CD8-positive, alpha-beta T cell (primary cell): ENCODE measurements at regions of chr5 and their contacts with region 1.

Region 1: DNA sequence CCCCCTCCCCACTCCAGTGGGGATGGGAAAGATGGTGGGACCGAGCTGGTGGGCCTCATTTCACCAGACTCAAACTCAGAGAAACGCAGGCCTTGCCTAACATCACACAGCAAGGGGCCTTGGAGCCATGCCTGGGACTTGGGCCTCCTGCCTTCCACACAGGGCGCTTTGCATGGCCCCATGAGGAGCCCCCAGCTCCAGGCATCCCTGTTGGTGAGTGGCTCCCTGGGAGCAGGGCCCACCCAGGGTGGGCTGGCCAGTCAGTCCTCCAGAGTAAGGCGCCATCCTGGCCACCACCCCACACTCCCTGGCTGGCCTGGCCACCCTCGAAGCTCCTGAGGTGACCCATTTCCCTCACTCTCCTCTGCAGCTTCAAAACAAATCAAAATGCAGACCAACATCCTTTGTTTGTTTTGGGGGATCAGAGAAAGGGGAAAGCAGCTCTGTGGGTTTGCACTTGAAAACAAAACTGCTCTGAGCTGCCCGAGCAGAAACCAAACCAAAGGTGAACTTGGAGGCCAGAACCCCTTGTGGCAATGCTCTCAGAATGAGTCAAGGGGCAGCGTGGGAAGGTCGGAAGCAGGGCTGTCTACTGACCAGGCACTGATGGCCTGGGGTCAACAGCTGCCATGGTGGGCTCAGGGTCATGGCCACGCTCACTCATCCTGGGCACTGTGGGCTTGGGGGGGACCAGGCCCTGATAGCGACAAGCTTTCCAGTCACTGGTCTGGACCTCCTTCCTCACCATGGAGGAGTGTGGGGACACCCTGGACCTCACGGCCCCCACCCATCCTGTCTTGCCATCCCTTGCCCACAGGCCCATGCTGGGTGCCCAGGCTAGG is 37.0 kb upstream of the VDAC1 start:
- DNase-seq: peak in 1 of 9 experiments; percentile 45
- ATAC-seq: no peak
- H3K4me3 ChIP-seq: no peak overlapping the region
- H3K4me3 Mint-ChIP-seq: peak overlapping the region; percentile 60
- H3K27ac ChIP-seq: no peak overlapping the region
- H3K27ac Mint-ChIP-seq: peak overlapping the region; percentile 87
- H3K4me1 ChIP-seq: peaks cover 52% of the 10 kb centered on the region
- H3K4me1 Mint-ChIP-seq: peaks cover 61% of the 10 kb centered on the region
- H3K27me3 ChIP-seq: no peaks in the 10 kb centered on the region
- H3K27me3 Mint-ChIP-seq: no peaks in the 10 kb centered on the region
- CTCF ChIP-seq: no peak

Region 2: DNA sequence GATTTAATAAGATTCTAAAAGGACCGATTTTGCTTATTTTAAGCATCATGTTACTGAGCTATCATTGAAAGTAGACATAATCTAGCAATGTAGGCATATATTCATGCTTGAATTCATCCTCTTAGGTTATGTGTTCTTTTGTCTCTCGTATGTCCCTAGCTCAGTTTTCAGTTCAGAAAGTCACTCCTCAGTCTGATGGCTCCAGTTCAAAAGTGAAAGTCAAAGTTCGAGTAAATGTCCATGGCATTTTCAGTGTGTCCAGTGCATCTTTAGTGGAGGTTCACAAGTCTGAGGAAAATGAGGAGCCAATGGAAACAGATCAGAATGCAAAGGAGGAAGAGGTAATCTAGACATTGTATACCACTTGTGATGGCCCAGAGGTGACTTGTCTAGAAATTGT is 950.8 kb before region 1 on chr5:
- CTCF ChIA-PET with region 1: no interaction called
- POLR2A ChIA-PET with region 1: no interaction called
- intact Hi-C with region 1: no loop called
- DNase-seq: no peak
- ATAC-seq: no peak
- H3K4me3 ChIP-seq: no peak overlapping the region
- H3K4me3 Mint-ChIP-seq: no peak overlapping the region
- H3K27ac ChIP-seq: no peak overlapping the region
- H3K27ac Mint-ChIP-seq: peak overlapping the region; percentile 2
- H3K4me1 ChIP-seq: no peaks in the 10 kb centered on the region
- H3K4me1 Mint-ChIP-seq: no peaks in the 10 kb centered on the region
- H3K27me3 ChIP-seq: no peaks in the 10 kb centered on the region
- H3K27me3 Mint-ChIP-seq: no peaks in the 10 kb centered on the region
- CTCF ChIP-seq: no peak

Region 3: DNA sequence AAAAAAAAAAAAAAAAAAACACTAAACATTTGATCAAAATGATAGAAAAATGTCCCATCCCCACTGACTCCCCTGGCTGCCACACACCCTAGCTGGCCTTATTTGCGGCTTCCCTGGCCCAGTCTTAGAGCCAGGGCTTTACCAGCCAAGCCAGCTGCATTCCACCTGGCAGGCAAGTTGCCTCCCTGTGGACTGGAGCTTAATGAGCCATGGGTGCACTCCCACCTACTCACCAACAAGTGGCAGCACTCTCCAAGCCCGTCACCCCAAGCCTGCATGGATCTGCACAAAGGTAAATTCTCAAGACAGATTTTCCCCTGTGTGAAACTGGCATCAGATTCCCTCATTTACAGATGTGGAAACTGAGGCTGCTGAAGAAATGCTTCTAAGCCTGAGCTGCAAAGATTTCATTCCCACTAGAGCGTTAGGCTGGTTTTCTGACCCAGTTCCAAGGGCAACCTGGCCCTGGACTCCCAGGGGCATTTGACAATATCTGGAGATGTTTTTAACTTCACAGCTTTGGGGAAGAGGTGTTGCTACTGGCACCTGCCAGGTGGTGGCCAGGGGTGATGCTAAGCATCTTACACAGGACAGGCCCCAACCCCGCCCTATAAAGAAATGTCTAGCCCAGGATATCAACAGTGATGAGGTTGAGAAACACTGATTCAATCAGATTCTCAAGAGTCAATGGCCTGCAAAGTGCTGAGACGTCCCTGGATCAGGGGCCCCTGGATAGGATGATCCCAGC is 15.1 kb before region 1 on chr5:
- CTCF ChIA-PET with region 1: interaction called, 34 read pairs
- POLR2A ChIA-PET with region 1: no interaction called
- intact Hi-C with region 1: no loop called
- DNase-seq: peak in 8 of 9 experiments; percentile 15 to 76 (median 60)
- ATAC-seq: peak; percentile 100
- H3K4me3 ChIP-seq: no peak overlapping the region
- H3K4me3 Mint-ChIP-seq: no peak overlapping the region
- H3K27ac ChIP-seq: no peak overlapping the region
- H3K27ac Mint-ChIP-seq: no peak overlapping the region
- H3K4me1 ChIP-seq: no peaks in the 10 kb centered on the region
- H3K4me1 Mint-ChIP-seq: peaks cover 4% of the 10 kb centered on the region
- H3K27me3 ChIP-seq: no peaks in the 10 kb centered on the region
- H3K27me3 Mint-ChIP-seq: peaks cover 2% of the 10 kb centered on the region
- CTCF ChIP-seq: peak; percentile 58

Region 4: DNA sequence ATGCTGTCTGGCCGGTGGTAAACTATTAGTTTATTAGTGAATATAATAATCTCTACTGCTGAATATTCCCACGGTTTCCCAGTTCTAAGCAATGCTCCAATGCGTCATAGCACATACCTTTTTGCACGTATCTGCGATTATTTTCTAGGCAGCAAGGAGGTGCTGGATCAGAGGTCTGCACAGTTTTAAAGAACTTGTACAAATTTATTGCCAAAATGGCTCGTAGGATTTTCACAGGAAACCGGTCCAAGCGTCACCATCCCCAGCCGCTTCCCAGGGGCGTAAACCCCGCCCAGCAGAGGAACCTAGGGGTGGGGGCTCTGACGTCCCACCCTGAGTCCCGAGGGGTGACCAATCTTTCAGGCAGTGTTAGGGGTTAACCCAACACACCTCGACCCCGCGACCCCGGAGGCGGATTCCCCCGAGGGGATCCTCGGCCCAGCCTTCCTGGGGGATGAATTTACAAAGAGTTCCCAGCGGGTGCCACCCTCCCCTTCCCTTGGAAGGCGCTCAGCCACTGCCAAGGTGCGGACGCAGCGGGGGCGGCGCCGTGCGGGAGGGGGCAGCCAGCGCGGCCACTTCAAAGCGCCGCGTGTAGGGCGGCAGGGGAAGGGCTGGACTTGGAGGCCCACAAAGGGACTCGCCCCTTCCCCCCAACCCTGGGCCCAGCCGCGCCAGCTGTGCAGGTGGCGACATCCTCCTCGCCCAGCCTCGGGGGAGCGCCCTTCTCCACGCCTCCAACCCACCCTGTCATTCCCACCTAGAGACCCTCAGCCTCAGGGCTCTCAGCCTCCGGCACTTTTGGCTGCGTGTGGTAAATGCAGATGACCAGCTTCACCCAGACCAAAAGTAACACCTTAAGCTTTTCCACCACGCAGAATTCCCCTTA is 29.2 kb after region 1 on chr5:
- CTCF ChIA-PET with region 1: interaction called, 37 read pairs
- POLR2A ChIA-PET with region 1: interaction called, 3 read pairs
- intact Hi-C with region 1: loop called in 1 of 2 experiments (anchors 5 kb)
- DNase-seq: peak in 5 of 9 experiments; percentile 32 to 59 (median 42)
- ATAC-seq: peak; percentile 53
- H3K4me3 ChIP-seq: peak overlapping the region; percentile 40 to 44
- H3K4me3 Mint-ChIP-seq: peak overlapping the region; percentile 79
- H3K27ac ChIP-seq: no peak overlapping the region
- H3K27ac Mint-ChIP-seq: peak overlapping the region; percentile 92
- H3K4me1 ChIP-seq: peaks cover 67% of the 10 kb centered on the region
- H3K4me1 Mint-ChIP-seq: peaks cover 69% of the 10 kb centered on the region
- H3K27me3 ChIP-seq: peaks cover 0 to 3% of the 10 kb centered on the region in 2 experiments
- H3K27me3 Mint-ChIP-seq: no peaks in the 10 kb centered on the region
- CTCF ChIP-seq: peak; percentile 13

Region 5: DNA sequence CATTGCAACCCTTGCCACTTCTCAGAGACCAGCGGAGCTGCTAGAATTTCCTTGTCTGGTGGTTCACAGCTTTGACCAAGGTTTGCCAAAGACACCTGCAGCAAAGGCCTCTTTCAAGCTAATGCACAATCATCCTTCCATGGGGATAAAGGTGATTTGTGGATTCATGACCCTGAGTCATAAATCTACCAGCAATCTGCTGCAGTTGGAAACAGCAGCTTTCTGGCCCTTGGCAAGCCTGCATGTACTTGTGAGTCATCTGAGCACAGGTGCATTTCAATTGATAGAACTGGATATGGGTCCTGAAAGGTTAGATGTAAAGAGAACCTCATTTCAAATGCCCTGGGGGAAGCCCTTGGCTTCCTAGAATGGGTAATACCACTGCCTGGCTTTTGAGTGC is 51.1 kb after region 1 on chr5:
- CTCF ChIA-PET with region 1: interaction called, 24 read pairs
- POLR2A ChIA-PET with region 1: interaction called, 7 read pairs
- intact Hi-C with region 1: no loop called
- DNase-seq: peak in 1 of 9 experiments; percentile 25
- ATAC-seq: no peak
- H3K4me3 ChIP-seq: no peak overlapping the region
- H3K4me3 Mint-ChIP-seq: peak overlapping the region; percentile 40
- H3K27ac ChIP-seq: no peak overlapping the region
- H3K27ac Mint-ChIP-seq: peak overlapping the region; percentile 90
- H3K4me1 ChIP-seq: peaks cover 96% of the 10 kb centered on the region
- H3K4me1 Mint-ChIP-seq: peaks cover 88% of the 10 kb centered on the region
- H3K27me3 ChIP-seq: no peaks in the 10 kb centered on the region
- H3K27me3 Mint-ChIP-seq: no peaks in the 10 kb centered on the region
- CTCF ChIP-seq: no peak

Region 6: GRCh38 chr5:134132372-134133034 is 90.7 kb after region 1 on chr5:
- CTCF ChIA-PET with region 1: interaction called, 773 read pairs
- POLR2A ChIA-PET with region 1: interaction called, 249 read pairs
- intact Hi-C with region 1: no loop called
- DNase-seq: peak; percentile 72 to 99 (median 85)
- ATAC-seq: peak; percentile 70
- H3K4me3 ChIP-seq: peak overlapping the region; percentile 16 to 52
- H3K4me3 Mint-ChIP-seq: peak overlapping the region; percentile 95
- H3K27ac ChIP-seq: peak overlapping the region; percentile 64 to 88
- H3K27ac Mint-ChIP-seq: peak overlapping the region; percentile 96
- H3K4me1 ChIP-seq: peaks cover 98% of the 10 kb centered on the region
- H3K4me1 Mint-ChIP-seq: peaks cover 95% of the 10 kb centered on the region
- H3K27me3 ChIP-seq: no peaks in the 10 kb centered on the region
- H3K27me3 Mint-ChIP-seq: no peaks in the 10 kb centered on the region
- CTCF ChIP-seq: peak; percentile 44

Region 7: DNA sequence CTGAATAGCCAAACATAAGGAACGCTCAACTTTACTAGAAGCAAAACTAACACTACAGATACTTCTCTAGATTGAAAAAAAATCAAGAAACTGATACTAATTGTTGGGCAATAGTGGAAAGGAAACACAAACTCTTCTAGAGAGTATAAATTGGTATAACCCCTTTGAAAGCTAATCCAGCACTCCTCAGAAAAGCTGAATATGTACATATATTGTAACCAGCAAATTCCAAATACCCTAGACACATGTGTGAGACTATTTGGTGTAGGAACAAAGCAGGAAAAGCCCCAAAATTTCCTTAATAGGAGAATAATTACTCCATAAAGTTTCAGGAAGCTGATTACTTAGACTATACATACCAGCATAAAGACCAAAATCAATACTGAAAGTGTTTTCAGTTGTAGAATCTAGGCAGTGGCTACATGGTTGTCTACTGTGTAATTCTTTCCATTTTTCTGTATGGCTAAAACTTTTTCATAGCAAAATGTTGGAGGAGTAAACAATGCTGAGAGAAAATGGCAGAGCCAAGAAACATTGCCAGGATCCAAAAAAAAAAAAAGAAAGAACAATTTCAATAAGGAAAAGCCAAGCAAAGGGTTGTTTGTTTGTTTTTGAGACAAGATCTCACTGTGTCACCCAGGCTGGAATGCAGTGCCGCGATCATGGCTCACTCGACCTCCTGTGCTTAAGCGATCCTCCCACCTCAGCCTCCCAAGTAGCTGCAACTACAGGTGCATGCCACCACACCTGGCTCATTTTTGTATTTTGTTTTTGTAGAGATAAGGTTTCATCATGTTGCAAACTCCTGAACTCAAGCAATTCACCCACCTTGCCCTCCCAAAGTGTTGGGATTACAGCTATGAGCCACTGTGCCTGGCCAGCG is 120.0 kb after region 1 on chr5:
- CTCF ChIA-PET with region 1: interaction called, 773 read pairs
- POLR2A ChIA-PET with region 1: interaction called, 4 read pairs
- intact Hi-C with region 1: no loop called
- DNase-seq: no peak
- ATAC-seq: no peak
- H3K4me3 ChIP-seq: no peak overlapping the region
- H3K4me3 Mint-ChIP-seq: no peak overlapping the region
- H3K27ac ChIP-seq: no peak overlapping the region
- H3K27ac Mint-ChIP-seq: no peak overlapping the region
- H3K4me1 ChIP-seq: peaks cover 9% of the 10 kb centered on the region
- H3K4me1 Mint-ChIP-seq: peaks cover 47% of the 10 kb centered on the region
- H3K27me3 ChIP-seq: no peaks in the 10 kb centered on the region
- H3K27me3 Mint-ChIP-seq: no peaks in the 10 kb centered on the region
- CTCF ChIP-seq: no peak

Region 8: GRCh38 chr5:134289509-134290113 is 247.8 kb after region 1 on chr5:
- CTCF ChIA-PET with region 1: interaction called, 12 read pairs
- POLR2A ChIA-PET with region 1: no interaction called
- intact Hi-C with region 1: loop called in 1 of 2 experiments (anchors 5 kb)
- DNase-seq: peak in 8 of 9 experiments; percentile 14 to 77 (median 40)
- ATAC-seq: peak; percentile 72
- H3K4me3 ChIP-seq: no peak overlapping the region
- H3K4me3 Mint-ChIP-seq: no peak overlapping the region
- H3K27ac ChIP-seq: no peak overlapping the region
- H3K27ac Mint-ChIP-seq: no peak overlapping the region
- H3K4me1 ChIP-seq: no peaks in the 10 kb centered on the region
- H3K4me1 Mint-ChIP-seq: no peaks in the 10 kb centered on the region
- H3K27me3 ChIP-seq: no peaks in the 10 kb centered on the region
- H3K27me3 Mint-ChIP-seq: peaks cover 2% of the 10 kb centered on the region
- CTCF ChIP-seq: peak; percentile 59

Region 9: DNA sequence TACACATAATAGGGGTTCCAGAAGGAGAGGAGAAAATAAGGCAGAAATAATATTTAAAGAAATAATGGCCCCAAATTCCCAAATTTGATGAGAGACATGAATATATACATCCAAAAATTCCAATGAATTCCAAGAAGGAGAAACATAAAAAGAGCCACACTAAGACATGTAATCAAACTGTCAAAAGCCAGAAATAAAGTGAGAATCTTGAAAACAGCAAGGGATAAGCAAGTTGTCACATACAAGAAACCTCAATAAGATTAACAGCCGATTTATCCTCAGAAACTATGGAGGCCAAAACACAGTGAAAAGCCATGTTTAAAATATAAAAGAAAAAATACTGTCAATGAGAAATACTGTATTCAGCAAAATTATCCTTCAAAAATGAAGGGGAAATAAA is 940.4 kb after region 1 on chr5:
- CTCF ChIA-PET with region 1: no interaction called
- POLR2A ChIA-PET with region 1: no interaction called
- intact Hi-C with region 1: no loop called
- DNase-seq: no peak
- ATAC-seq: no peak
- H3K4me3 ChIP-seq: no peak overlapping the region
- H3K4me3 Mint-ChIP-seq: no peak overlapping the region
- H3K27ac ChIP-seq: no peak overlapping the region
- H3K27ac Mint-ChIP-seq: no peak overlapping the region
- H3K4me1 ChIP-seq: no peaks in the 10 kb centered on the region
- H3K4me1 Mint-ChIP-seq: no peaks in the 10 kb centered on the region
- H3K27me3 ChIP-seq: no peaks in the 10 kb centered on the region
- H3K27me3 Mint-ChIP-seq: peaks cover 12% of the 10 kb centered on the region
- CTCF ChIP-seq: no peak